ENCODE measurements at regions of chr11 and their contacts with region 1.

Region 1: GRCh38 chr11:73866586-73866996 is 10.1 kb downstream of the COA4 start:
- DNase-seq: no peak
- ATAC-seq: no peak; the same call in 2 of the 3 replicates
- H3K4me3 ChIP-seq: no peak overlapping the region
- H3K27ac ChIP-seq: 0 out of 3 replicates have a peak overlapping the region, but pooled peaks have one; percentile 31
- H3K4me1 ChIP-seq: no peaks in the 10 kb centered on the region; a peak in 1 of 5 replicates
- H3K27me3 ChIP-seq: no peaks in the 10 kb centered on the region
- CTCF ChIP-seq: no peak
- EP300 ChIP-seq: no peak
- POLR2A ChIP-seq: 0 out of 2 replicates have a peak, but pooled peaks have one; percentile 26
- RAD21 ChIP-seq: no peak

Region 2: GRCh38 chr11:73856031-73856567 is 10.5 kb before region 1 on chr11:
- CTCF ChIA-PET with region 1: no interaction called
- POLR2A ChIA-PET with region 1: interaction called, 20 read pairs
- in situ Hi-C with region 1: no loop called
- intact Hi-C with region 1: no loop called
- DNase-seq: no peak
- ATAC-seq: peak; percentile 26; the same call in 1 of the 3 replicates
- H3K4me3 ChIP-seq: no peak overlapping the region
- H3K27ac ChIP-seq: no peak overlapping the region
- H3K4me1 ChIP-seq: peaks cover 0 to 13% of the 10 kb centered on the region in 2 experiments; a peak in 3 of 5 replicates
- H3K27me3 ChIP-seq: no peaks in the 10 kb centered on the region
- CTCF ChIP-seq: no peak
- EP300 ChIP-seq: no peak
- POLR2A ChIP-seq: no peak
- RAD21 ChIP-seq: no peak

Region 3: DNA sequence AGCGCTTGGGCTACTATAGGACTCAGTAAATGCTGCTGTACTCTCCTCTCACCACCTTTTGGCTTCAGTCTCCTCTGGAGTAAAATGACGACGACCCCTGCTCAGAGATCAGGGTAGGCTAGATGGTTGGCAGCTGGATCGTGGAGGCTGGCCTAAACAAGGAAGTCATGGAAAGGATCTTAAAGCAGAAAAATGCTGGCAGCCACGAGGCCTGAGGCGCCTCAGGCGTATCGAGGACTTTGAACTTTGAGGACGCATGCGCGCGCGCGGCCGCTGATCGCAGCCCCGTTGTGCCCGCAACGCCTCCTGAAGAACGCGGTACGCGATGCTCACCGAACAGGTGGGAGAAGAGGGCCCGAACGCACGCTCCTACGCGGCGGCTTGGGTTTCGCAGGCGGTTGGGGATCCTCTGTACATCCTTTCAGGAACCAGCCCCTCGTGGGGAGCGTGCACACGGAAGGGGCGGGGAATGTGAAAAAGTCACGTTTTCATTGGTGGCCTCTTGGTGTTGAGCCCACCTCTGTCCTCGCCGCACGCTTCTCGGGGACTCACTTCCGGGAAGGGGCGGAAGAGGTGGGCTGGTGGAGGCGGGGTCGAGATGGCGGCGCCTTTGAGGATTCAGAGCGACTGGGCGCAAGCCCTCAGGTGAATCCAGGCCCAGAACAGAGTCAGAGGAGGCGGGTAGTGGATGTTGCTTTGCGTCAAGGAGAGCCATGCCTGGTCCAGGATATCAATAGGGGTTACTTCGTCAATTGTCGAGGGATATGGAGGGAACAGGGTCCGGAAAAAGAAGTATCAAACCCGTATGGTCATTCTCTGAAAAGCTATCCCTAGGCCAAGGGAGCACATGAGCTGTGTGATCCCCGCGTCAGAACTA is 10.1 kb after region 1 on chr11 and contains the starts of genes COA4 and PAAF1:
- CTCF ChIA-PET with region 1: no interaction called
- POLR2A ChIA-PET with region 1: interaction called, 12 read pairs
- in situ Hi-C with region 1: no loop called
- intact Hi-C with region 1: no loop called
- DNase-seq: peak; percentile 94 to 98 (median 96)
- ATAC-seq: peak; percentile 96
- H3K4me3 ChIP-seq: peak within 1 kb of the TSS; percentile 67
- H3K27ac ChIP-seq: peak within 1 kb of the TSS; percentile 92
- H3K4me1 ChIP-seq: peaks cover 5 to 14% of the 10 kb centered on the region in 2 experiments; a peak in 4 of 5 replicates
- H3K27me3 ChIP-seq: no peaks in the 10 kb centered on the region
- CTCF ChIP-seq: no peak
- EP300 ChIP-seq: no peak
- POLR2A ChIP-seq: peak; percentile 94
- RAD21 ChIP-seq: no peak
- polyA plus RNA-seq, gene COA4: 108 to 152 TPM
- polyA plus RNA-seq, gene PAAF1: 69.2 to 78.6 TPM

Region 4: GRCh38 chr11:73965076-73965860 is 98.7 kb after region 1 on chr11:
- CTCF ChIA-PET with region 1: no interaction called
- POLR2A ChIA-PET with region 1: no interaction called
- in situ Hi-C with region 1: no loop called
- intact Hi-C with region 1: no loop called
- DNase-seq: no peak
- ATAC-seq: no peak
- H3K4me3 ChIP-seq: no peak overlapping the region
- H3K27ac ChIP-seq: no peak overlapping the region
- H3K4me1 ChIP-seq: peaks cover 7 to 13% of the 10 kb centered on the region in 2 experiments; a peak in 3 of 5 replicates
- H3K27me3 ChIP-seq: no peaks in the 10 kb centered on the region; a peak in 1 of 5 replicates
- CTCF ChIP-seq: no peak
- EP300 ChIP-seq: no peak
- POLR2A ChIP-seq: no peak
- RAD21 ChIP-seq: no peak

Measured in K562 (cell line).